T-cell (primary cell): ENCODE measurements at regions of chr4 and their contacts with region 1.

Region 1: GRCh38 chr4:83110223-83110945 is 4.1 kb downstream of the PLAC8 start:
- DNase-seq: peak; percentile 75 to 93 (median 87)
- ATAC-seq: peak; percentile 79 to 81 (median 80)
- H3K4me3 ChIP-seq: peak overlapping the region; percentile 76 to 84
- H3K4me3 Mint-ChIP-seq: peak overlapping the region; percentile 90 to 95 (median 95)
- H3K27ac ChIP-seq: peak overlapping the region; percentile 79
- H3K27ac Mint-ChIP-seq: peak overlapping the region; percentile 92 to 98
- H3K4me1 ChIP-seq: peaks cover 26 to 51% of the 10 kb centered on the region in 2 experiments
- H3K4me1 Mint-ChIP-seq: peaks cover 51 to 65% (median 58%) of the 10 kb centered on the region in 3 donors
- H3K27me3 ChIP-seq: no peaks in the 10 kb centered on the region
- H3K27me3 Mint-ChIP-seq: no peaks in the 10 kb centered on the region

Region 2: GRCh38 chr4:83019794-83020494 is 90.4 kb before region 1 on chr4:
- CTCF ChIA-PET with region 1: no interaction called
- POLR2A ChIA-PET with region 1: no interaction called
- DNase-seq: no peak
- ATAC-seq: no peak
- H3K4me3 ChIP-seq: no peak overlapping the region
- H3K4me3 Mint-ChIP-seq: no peak overlapping the region
- H3K27ac ChIP-seq: no peak overlapping the region
- H3K27ac Mint-ChIP-seq: no peak overlapping the region
- H3K4me1 ChIP-seq: no peaks in the 10 kb centered on the region
- H3K4me1 Mint-ChIP-seq: no peaks in the 10 kb centered on the region
- H3K27me3 ChIP-seq: no peaks in the 10 kb centered on the region
- H3K27me3 Mint-ChIP-seq: no peaks in the 10 kb centered on the region

Region 3: GRCh38 chr4:83083925-83084475 is 26.4 kb before region 1 on chr4:
- CTCF ChIA-PET with region 1: interaction called, 4 to 21 read pairs
- POLR2A ChIA-PET with region 1: interaction called in 1 of 2 experiments, 3 read pairs
- DNase-seq: peak in 34 of 35 experiments; percentile 7 to 87 (median 71)
- ATAC-seq: peak; percentile 91 to 99 (median 98)
- H3K4me3 ChIP-seq: peak overlapping the region in 1 of 2 donors; percentile 5
- H3K4me3 Mint-ChIP-seq: peak overlapping the region in 2 of 3 donors; percentile 19 to 61
- H3K27ac ChIP-seq: peak overlapping the region; percentile 86
- H3K27ac Mint-ChIP-seq: peak overlapping the region; percentile 77 to 98
- H3K4me1 ChIP-seq: peaks cover 10 to 31% of the 10 kb centered on the region in 2 experiments
- H3K4me1 Mint-ChIP-seq: peaks cover 22 to 48% (median 47%) of the 10 kb centered on the region in 3 donors
- H3K27me3 ChIP-seq: peaks cover 0 to 3% of the 10 kb centered on the region in 2 experiments
- H3K27me3 Mint-ChIP-seq: no peaks in the 10 kb centered on the region

Region 4: GRCh38 chr4:83124111-83124780 is 13.9 kb after region 1 on chr4:
- CTCF ChIA-PET with region 1: interaction called, 3 to 23 read pairs
- POLR2A ChIA-PET with region 1: interaction called in 1 of 2 experiments, 17 read pairs
- DNase-seq: no peak
- ATAC-seq: no peak
- H3K4me3 ChIP-seq: no peak overlapping the region
- H3K4me3 Mint-ChIP-seq: peak overlapping the region in 1 of 3 donors; percentile 6
- H3K27ac ChIP-seq: no peak overlapping the region
- H3K27ac Mint-ChIP-seq: no peak overlapping the region
- H3K4me1 ChIP-seq: peaks cover 5 to 16% of the 10 kb centered on the region in 2 experiments
- H3K4me1 Mint-ChIP-seq: peaks cover 12 to 32% (median 26%) of the 10 kb centered on the region in 3 donors
- H3K27me3 ChIP-seq: no peaks in the 10 kb centered on the region
- H3K27me3 Mint-ChIP-seq: no peaks in the 10 kb centered on the region

Region 5: GRCh38 chr4:83217721-83218522 is 107.5 kb after region 1 on chr4:
- CTCF ChIA-PET with region 1: interaction called, 6 to 29 read pairs
- POLR2A ChIA-PET with region 1: interaction called, 3 to 10 read pairs
- DNase-seq: peak; percentile 29 to 89 (median 71)
- ATAC-seq: peak; percentile 89 to 95 (median 92)
- H3K4me3 ChIP-seq: peak overlapping the region in 1 of 2 donors; percentile 27
- H3K4me3 Mint-ChIP-seq: peak overlapping the region; percentile 49 to 88 (median 81)
- H3K27ac ChIP-seq: peak overlapping the region; percentile 89
- H3K27ac Mint-ChIP-seq: peak overlapping the region; percentile 96
- H3K4me1 ChIP-seq: peaks cover 53 to 68% of the 10 kb centered on the region in 2 experiments
- H3K4me1 Mint-ChIP-seq: peaks cover 74 to 89% (median 79%) of the 10 kb centered on the region in 3 donors
- H3K27me3 ChIP-seq: no peaks in the 10 kb centered on the region
- H3K27me3 Mint-ChIP-seq: no peaks in the 10 kb centered on the region

Region 6: DNA sequence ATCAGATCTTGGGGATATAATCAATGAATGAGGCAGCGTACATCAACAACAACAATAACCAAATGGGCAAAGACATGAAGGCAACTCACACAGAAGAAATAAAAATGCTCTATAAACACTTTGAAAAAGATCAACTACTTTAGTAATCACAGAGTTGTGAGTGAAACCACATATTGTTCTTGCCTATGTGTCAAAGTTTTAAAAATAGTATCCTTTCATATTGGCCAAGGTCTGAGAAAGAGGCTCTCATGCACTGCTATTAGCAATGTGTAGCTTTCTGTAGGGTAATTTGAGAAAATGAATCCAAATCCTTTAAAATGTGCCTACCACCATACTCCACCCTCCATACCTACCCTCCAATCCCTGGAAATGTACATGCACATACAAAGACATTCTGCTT is 149.2 kb after region 1 on chr4:
- CTCF ChIA-PET with region 1: interaction called, 7 to 54 read pairs
- POLR2A ChIA-PET with region 1: no interaction called
- DNase-seq: no peak
- ATAC-seq: no peak
- H3K4me3 ChIP-seq: no peak overlapping the region
- H3K4me3 Mint-ChIP-seq: no peak overlapping the region
- H3K27ac ChIP-seq: no peak overlapping the region
- H3K27ac Mint-ChIP-seq: no peak overlapping the region
- H3K4me1 ChIP-seq: peaks cover 0 to 4% of the 10 kb centered on the region in 2 experiments
- H3K4me1 Mint-ChIP-seq: peaks cover 8 to 18% (median 9%) of the 10 kb centered on the region in 3 donors
- H3K27me3 ChIP-seq: no peaks in the 10 kb centered on the region
- H3K27me3 Mint-ChIP-seq: no peaks in the 10 kb centered on the region